Activated naive CD4-positive, alpha-beta T cell treated with anti-CD3 and anti-CD28 coated beads for 36 hours (primary cell): ENCODE measurements at regions of chr4 and their contacts with region 1.

Region 1: GRCh38 chr4:168831919-168832762 is 177.9 kb downstream of the CBR4 start:
- DNase-seq: peak; percentile 70
- H3K4me3 Mint-ChIP-seq: peak overlapping the region; percentile 74
- H3K27ac Mint-ChIP-seq: no peak overlapping the region
- H3K4me1 Mint-ChIP-seq: peaks cover 11% of the 10 kb centered on the region
- H3K27me3 Mint-ChIP-seq: peaks cover 57% of the 10 kb centered on the region

Region 2: DNA sequence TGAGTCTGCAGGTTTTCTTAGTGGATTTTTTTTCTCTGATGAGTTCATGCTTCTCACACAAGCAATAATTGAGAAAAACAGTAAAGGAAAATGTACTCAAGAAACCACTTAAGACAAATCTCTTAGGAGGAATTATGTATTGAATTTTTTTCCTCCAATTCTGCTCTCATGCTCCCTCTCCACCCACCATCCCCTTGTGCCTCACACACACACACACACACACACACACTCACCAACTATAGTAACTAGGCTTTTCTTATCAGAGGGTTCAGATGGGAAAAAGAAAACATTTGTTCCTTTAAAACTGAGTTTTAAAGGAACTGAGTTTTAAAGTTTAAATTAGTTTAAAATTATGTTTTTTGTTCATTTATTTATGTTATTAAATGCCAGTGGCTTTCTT is 786.8 kb before region 1 on chr4:
- CTCF ChIA-PET with region 1: no interaction called
- intact Hi-C with region 1: no loop called
- DNase-seq: no peak
- H3K4me3 Mint-ChIP-seq: no peak overlapping the region
- H3K27ac Mint-ChIP-seq: no peak overlapping the region
- H3K4me1 Mint-ChIP-seq: no peaks in the 10 kb centered on the region
- H3K27me3 Mint-ChIP-seq: no peaks in the 10 kb centered on the region

Region 3: GRCh38 chr4:168817370-168817769 is 14.8 kb before region 1 on chr4:
- CTCF ChIA-PET with region 1: interaction called, 5 read pairs
- intact Hi-C with region 1: loop called (anchors 1 kb)
- DNase-seq: no peak
- H3K4me3 Mint-ChIP-seq: no peak overlapping the region
- H3K27ac Mint-ChIP-seq: no peak overlapping the region
- H3K4me1 Mint-ChIP-seq: peaks cover 11% of the 10 kb centered on the region
- H3K27me3 Mint-ChIP-seq: peaks cover 42% of the 10 kb centered on the region

Region 4: GRCh38 chr4:168877511-168878491 is 45.7 kb after region 1 on chr4:
- CTCF ChIA-PET with region 1: no interaction called
- intact Hi-C with region 1: loop called (anchors 2 kb)
- DNase-seq: peak; percentile 22
- H3K4me3 Mint-ChIP-seq: peak overlapping the region; percentile 70
- H3K27ac Mint-ChIP-seq: no peak overlapping the region
- H3K4me1 Mint-ChIP-seq: peaks cover 6% of the 10 kb centered on the region
- H3K27me3 Mint-ChIP-seq: peaks cover 71% of the 10 kb centered on the region